Activated CD4-positive, alpha-beta T cell treated with anti-CD3 and anti-CD28 coated beads, Interleukin-2, amount 10 ng/mL, durations not matched to agents 7 days and 5 days (primary cell): ENCODE measurements at regions of chr14 and their contacts with region 1.

Region 1: GRCh38 chr14:91367173-91368171 is 50.1 kb downstream of the CCDC88C start:
- DNase-seq: peak; percentile 69
- H3K4me3 Mint-ChIP-seq: peak overlapping the region; percentile 53
- H3K27ac Mint-ChIP-seq: peak overlapping the region; percentile 75
- H3K4me1 Mint-ChIP-seq: peaks cover 82% of the 10 kb centered on the region
- H3K27me3 Mint-ChIP-seq: no peaks in the 10 kb centered on the region

Region 2: DNA sequence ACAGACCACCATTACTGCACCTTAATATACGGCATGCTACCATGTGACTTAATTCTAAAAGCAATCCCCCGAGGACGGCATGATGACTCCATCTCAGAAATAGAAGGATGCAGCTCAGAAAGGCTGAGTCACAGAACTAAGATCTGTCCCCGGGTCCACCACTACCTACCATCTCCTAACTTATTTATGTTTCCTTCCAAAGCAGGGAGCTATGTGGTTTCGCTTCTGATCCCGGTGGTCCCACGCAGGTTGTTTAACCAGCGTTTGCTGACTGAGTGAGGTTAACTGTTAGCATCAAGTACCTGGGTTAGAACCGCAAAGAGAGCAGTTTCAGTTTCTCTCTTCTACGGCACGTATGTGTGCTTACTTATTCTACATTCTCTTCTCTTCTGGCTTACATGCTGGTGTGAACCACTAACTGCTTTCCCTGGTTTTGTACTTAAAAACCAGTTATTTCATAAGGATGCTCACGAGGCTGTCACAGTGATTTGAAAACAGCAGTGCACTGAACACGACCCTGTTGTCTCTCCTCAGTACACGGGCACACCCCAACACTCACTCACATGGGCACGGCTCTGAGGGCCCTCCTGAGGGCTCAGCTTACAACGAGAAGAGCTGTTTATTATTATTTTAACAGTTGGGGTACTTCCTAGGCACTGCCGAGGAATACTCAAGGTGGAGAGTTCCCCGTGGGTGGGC is 16.5 kb before region 1 on chr14:
- CTCF ChIA-PET with region 1: interaction called, 11 read pairs
- POLR2A ChIA-PET with region 1: no interaction called
- DNase-seq: peak; percentile 81
- H3K4me3 Mint-ChIP-seq: peak overlapping the region; percentile 75
- H3K27ac Mint-ChIP-seq: peak overlapping the region; percentile 94
- H3K4me1 Mint-ChIP-seq: peaks cover 91% of the 10 kb centered on the region
- H3K27me3 Mint-ChIP-seq: no peaks in the 10 kb centered on the region

Region 3: GRCh38 chr14:91453744-91454143 is 86.3 kb after region 1 on chr14:
- CTCF ChIA-PET with region 1: no interaction called
- POLR2A ChIA-PET with region 1: no interaction called
- DNase-seq: no peak
- H3K4me3 Mint-ChIP-seq: no peak overlapping the region
- H3K27ac Mint-ChIP-seq: no peak overlapping the region
- H3K4me1 Mint-ChIP-seq: peaks cover 17% of the 10 kb centered on the region
- H3K27me3 Mint-ChIP-seq: peaks cover 1% of the 10 kb centered on the region